B cell (primary cell): ENCODE measurements at regions of chr6 and their contacts with region 1.

Region 1: GRCh38 chr6:148700741-148701311 is 46.0 kb upstream of the UST start:
- DNase-seq: peak; percentile 56
- ATAC-seq: peak; percentile 65
- H3K4me3 ChIP-seq: peak overlapping the region; percentile 16 to 59 (median 51)
- H3K4me3 Mint-ChIP-seq: peak overlapping the region; percentile 82
- H3K27ac ChIP-seq: peak overlapping the region; percentile 38 to 44
- H3K27ac Mint-ChIP-seq: peak overlapping the region; percentile 47
- H3K4me1 ChIP-seq: peaks cover 13% of the 10 kb centered on the region in 2 donors
- H3K4me1 Mint-ChIP-seq: peaks cover 25% of the 10 kb centered on the region
- H3K27me3 ChIP-seq: no peaks in the 10 kb centered on the region
- H3K27me3 Mint-ChIP-seq: no peaks in the 10 kb centered on the region
- CTCF ChIP-seq: no peak

Region 2: DNA sequence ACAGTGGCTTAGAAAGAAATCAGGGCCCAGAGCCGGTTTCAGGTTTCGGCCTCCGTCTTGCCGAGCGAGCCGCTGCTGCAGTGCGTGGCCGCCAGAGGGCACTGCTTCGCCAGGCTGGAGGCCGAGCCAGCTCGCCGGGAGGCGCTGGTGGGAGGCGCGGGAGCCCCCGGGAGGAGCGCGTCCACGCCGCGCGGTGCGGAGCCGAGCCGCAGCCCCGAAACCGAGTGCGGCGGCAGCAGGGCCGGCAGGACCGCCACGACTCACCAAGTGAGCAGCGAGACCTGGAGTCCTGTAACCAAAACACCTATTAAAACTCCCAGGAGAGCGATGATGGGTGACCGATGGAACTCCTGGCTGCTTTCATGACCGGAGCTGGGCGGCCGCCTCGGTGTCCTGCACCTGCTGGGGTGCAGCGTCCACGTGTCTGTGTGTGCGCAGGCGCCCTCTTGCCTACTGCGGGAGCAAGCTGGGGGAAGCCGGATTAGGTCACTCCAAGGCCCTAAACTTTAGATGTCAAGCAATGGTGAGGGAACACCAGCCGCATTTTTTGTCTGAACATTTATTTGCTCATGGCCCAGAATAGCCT is 140.9 kb before region 1 on chr6:
- CTCF ChIA-PET with region 1: interaction called, 16 read pairs
- POLR2A ChIA-PET with region 1: no interaction called
- intact Hi-C with region 1: loop called (anchors 1 kb)
- DNase-seq: peak; percentile 82
- ATAC-seq: peak; percentile 88
- H3K4me3 ChIP-seq: peak overlapping the region in 4 of 5 experiments; percentile 26 to 64 (median 52)
- H3K4me3 Mint-ChIP-seq: peak overlapping the region; percentile 60
- H3K27ac ChIP-seq: no peak overlapping the region
- H3K27ac Mint-ChIP-seq: no peak overlapping the region
- H3K4me1 ChIP-seq: peaks cover 14 to 32% of the 10 kb centered on the region in 2 donors
- H3K4me1 Mint-ChIP-seq: peaks cover 23% of the 10 kb centered on the region
- H3K27me3 ChIP-seq: peaks cover 0 to 2% (median 0%) of the 10 kb centered on the region in 4 experiments
- H3K27me3 Mint-ChIP-seq: no peaks in the 10 kb centered on the region
- CTCF ChIP-seq: peak; percentile 98

Region 3: GRCh38 chr6:148649454-148649963 is 51.3 kb before region 1 on chr6:
- CTCF ChIA-PET with region 1: no interaction called
- POLR2A ChIA-PET with region 1: no interaction called
- intact Hi-C with region 1: loop called (anchors 10 kb)
- DNase-seq: peak; percentile 40
- ATAC-seq: peak; percentile 65
- H3K4me3 ChIP-seq: peak overlapping the region in 1 of 5 experiments; percentile 13
- H3K4me3 Mint-ChIP-seq: peak overlapping the region; percentile 71
- H3K27ac ChIP-seq: peak overlapping the region; percentile 40 to 48
- H3K27ac Mint-ChIP-seq: peak overlapping the region; percentile 64
- H3K4me1 ChIP-seq: peaks cover 25% of the 10 kb centered on the region in 2 donors
- H3K4me1 Mint-ChIP-seq: peaks cover 25% of the 10 kb centered on the region
- H3K27me3 ChIP-seq: no peaks in the 10 kb centered on the region
- H3K27me3 Mint-ChIP-seq: no peaks in the 10 kb centered on the region
- CTCF ChIP-seq: no peak

Region 4: GRCh38 chr6:149055195-149055899 is 354.5 kb after region 1 on chr6:
- CTCF ChIA-PET with region 1: no interaction called
- POLR2A ChIA-PET with region 1: interaction called, 12 read pairs
- intact Hi-C with region 1: no loop called
- DNase-seq: peak; percentile 52
- ATAC-seq: peak; percentile 42
- H3K4me3 ChIP-seq: peak overlapping the region in 1 of 5 experiments; percentile 6
- H3K4me3 Mint-ChIP-seq: peak overlapping the region; percentile 69
- H3K27ac ChIP-seq: peak overlapping the region in 1 of 2 donors; percentile 5
- H3K27ac Mint-ChIP-seq: peak overlapping the region; percentile 68
- H3K4me1 ChIP-seq: peaks cover 19 to 32% of the 10 kb centered on the region in 2 donors
- H3K4me1 Mint-ChIP-seq: peaks cover 41% of the 10 kb centered on the region
- H3K27me3 ChIP-seq: no peaks in the 10 kb centered on the region
- H3K27me3 Mint-ChIP-seq: no peaks in the 10 kb centered on the region
- CTCF ChIP-seq: no peak